ENCODE measurements at regions of chr1 and their contacts with region 1.

Region 1: GRCh38 chr1:46527474-46528296 is 23.8 kb downstream of the KNCN start:
- DNase-seq: peak; percentile 66
- ATAC-seq: peak; percentile 90
- H3K4me3 ChIP-seq: no peak overlapping the region
- H3K27ac ChIP-seq: no peak overlapping the region
- H3K4me1 ChIP-seq: peaks cover 3% of the 10 kb centered on the region; the same call in 1 of the 2 replicates
- H3K27me3 ChIP-seq: peaks cover 57% of the 10 kb centered on the region
- CTCF ChIP-seq: peak; percentile 98
- POLR2A ChIP-seq: peak; percentile 55; the same call in 1 of the 2 replicates
- RAD21 ChIP-seq: peak; percentile 99

Region 2: DNA sequence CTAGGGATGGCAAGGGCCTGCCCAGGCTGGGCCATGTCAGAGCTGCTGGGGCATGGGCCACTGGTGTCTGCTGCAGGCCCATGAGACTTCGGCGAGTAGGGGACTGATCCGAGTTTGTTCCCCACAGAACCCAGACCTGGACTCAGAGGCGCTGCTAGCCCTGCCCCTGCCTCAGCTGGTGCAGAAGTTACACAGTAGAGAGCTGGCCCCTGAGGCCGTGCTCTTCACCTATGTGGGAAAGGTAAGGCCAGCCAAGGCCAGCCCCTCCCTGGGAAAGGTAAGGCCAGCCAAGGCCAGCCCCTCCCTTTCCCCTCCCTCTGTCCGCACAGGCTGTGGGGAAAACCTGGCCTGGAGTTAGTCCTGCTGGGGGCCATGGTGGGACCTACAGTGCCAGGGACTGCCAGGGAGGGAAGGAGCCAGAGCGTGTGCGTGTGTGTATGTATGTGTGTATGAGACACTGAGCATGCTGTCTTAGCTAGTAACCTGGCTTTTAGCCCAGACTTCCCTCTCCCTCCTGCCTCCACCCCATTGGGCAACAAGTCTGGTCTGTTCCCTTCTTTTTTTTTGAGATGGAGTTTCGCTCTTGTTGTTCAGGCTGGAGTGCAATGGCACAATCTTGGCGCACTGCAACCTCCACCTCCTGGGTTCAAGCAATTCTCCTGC is 125.6 kb before region 1 on chr1:
- CTCF ChIA-PET with region 1: no interaction called
- POLR2A ChIA-PET with region 1: no interaction called
- dilution Hi-C with region 1: no loop called
- in situ Hi-C with region 1: loop called (anchors 5 kb)
- intact Hi-C with region 1: loop called (anchors 1 kb)
- DNase-seq: peak; percentile 95
- ATAC-seq: peak; percentile 86
- H3K4me3 ChIP-seq: no peak overlapping the region
- H3K27ac ChIP-seq: no peak overlapping the region
- H3K4me1 ChIP-seq: no peaks in the 10 kb centered on the region; the same call in 1 of the 2 replicates
- H3K27me3 ChIP-seq: peaks cover 26% of the 10 kb centered on the region
- CTCF ChIP-seq: no peak
- POLR2A ChIP-seq: no peak
- RAD21 ChIP-seq: no peak

Region 3: GRCh38 chr1:46442317-46443161 is 85.1 kb before region 1 on chr1:
- CTCF ChIA-PET with region 1: interaction called, 12 read pairs
- POLR2A ChIA-PET with region 1: no interaction called
- dilution Hi-C with region 1: no loop called
- in situ Hi-C with region 1: loop called (anchors 5 kb)
- intact Hi-C with region 1: loop called (anchors 1 kb)
- DNase-seq: peak; percentile 69
- ATAC-seq: peak; percentile 93
- H3K4me3 ChIP-seq: peak overlapping the region; percentile 20; the same call in 1 of the 2 replicates
- H3K27ac ChIP-seq: no peak overlapping the region
- H3K4me1 ChIP-seq: no peaks in the 10 kb centered on the region
- H3K27me3 ChIP-seq: peaks cover 42% of the 10 kb centered on the region
- CTCF ChIP-seq: peak; percentile 73
- POLR2A ChIP-seq: no peak
- RAD21 ChIP-seq: peak; percentile 30

Region 4: GRCh38 chr1:46477153-46477929 is 50.3 kb before region 1 on chr1:
- CTCF ChIA-PET with region 1: interaction called, 6 read pairs
- POLR2A ChIA-PET with region 1: no interaction called
- dilution Hi-C with region 1: no loop called
- in situ Hi-C with region 1: loop called (anchors 5 kb)
- intact Hi-C with region 1: loop called (anchors 1 kb)
- DNase-seq: peak; percentile 55
- ATAC-seq: peak; percentile 98
- H3K4me3 ChIP-seq: no peak overlapping the region
- H3K27ac ChIP-seq: no peak overlapping the region
- H3K4me1 ChIP-seq: no peaks in the 10 kb centered on the region
- H3K27me3 ChIP-seq: peaks cover 73% of the 10 kb centered on the region
- CTCF ChIP-seq: peak; percentile 91
- POLR2A ChIP-seq: no peak
- RAD21 ChIP-seq: peak; percentile 85